MCF 10A (cell line): ENCODE measurements at regions of chr4 and their contacts with region 1.

Region 1: GRCh38 chr4:57037982-57038604 is 59.4 kb downstream of the POLR2B start:
- DNase-seq: peak; percentile 76
- H3K4me3 Mint-ChIP-seq: no peak overlapping the region
- H3K27ac Mint-ChIP-seq: no peak overlapping the region
- H3K4me1 Mint-ChIP-seq: peaks cover 24% of the 10 kb centered on the region
- H3K27me3 Mint-ChIP-seq: no peaks in the 10 kb centered on the region
- CTCF ChIP-seq: peak; percentile 89

Region 2: GRCh38 chr4:57053508-57053907 is 15.4 kb after region 1 on chr4:
- CTCF ChIA-PET with region 1: interaction called, 28 read pairs
- POLR2A ChIA-PET with region 1: interaction called, 3 read pairs
- intact Hi-C with region 1: no loop called
- DNase-seq: peak; percentile 56
- H3K4me3 Mint-ChIP-seq: no peak overlapping the region
- H3K27ac Mint-ChIP-seq: no peak overlapping the region
- H3K4me1 Mint-ChIP-seq: peaks cover 25% of the 10 kb centered on the region
- H3K27me3 Mint-ChIP-seq: no peaks in the 10 kb centered on the region
- CTCF ChIP-seq: no peak

Region 3: DNA sequence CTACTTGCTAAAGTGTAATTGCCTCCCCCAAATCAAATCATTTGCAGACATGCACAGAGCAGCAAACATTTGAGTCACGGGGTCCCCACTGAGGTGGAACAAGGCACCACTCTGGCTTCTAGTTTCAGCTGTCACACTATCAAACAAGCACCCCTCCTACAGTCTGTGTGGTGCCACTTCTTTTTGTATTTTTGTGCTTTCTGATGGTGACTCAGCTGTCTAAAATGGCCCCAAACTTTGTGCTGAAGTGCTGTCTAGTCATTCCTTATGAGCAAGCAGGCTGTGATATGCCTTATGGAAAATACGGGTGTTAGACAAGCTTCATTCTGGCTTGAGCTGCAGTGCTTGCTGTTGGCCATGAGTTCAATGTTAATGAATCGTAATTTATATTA is 56.7 kb after region 1 on chr4:
- CTCF ChIA-PET with region 1: interaction called, 13 read pairs
- POLR2A ChIA-PET with region 1: interaction called, 6 read pairs
- intact Hi-C with region 1: no loop called
- DNase-seq: no peak
- H3K4me3 Mint-ChIP-seq: no peak overlapping the region
- H3K27ac Mint-ChIP-seq: no peak overlapping the region
- H3K4me1 Mint-ChIP-seq: peaks cover 29% of the 10 kb centered on the region
- H3K27me3 Mint-ChIP-seq: no peaks in the 10 kb centered on the region
- CTCF ChIP-seq: no peak

Region 4: GRCh38 chr4:57131849-57132742 is 94.0 kb after region 1 on chr4:
- CTCF ChIA-PET with region 1: interaction called, 22 read pairs
- POLR2A ChIA-PET with region 1: interaction called, 3 read pairs
- intact Hi-C with region 1: no loop called
- DNase-seq: no peak
- H3K4me3 Mint-ChIP-seq: no peak overlapping the region
- H3K27ac Mint-ChIP-seq: no peak overlapping the region
- H3K4me1 Mint-ChIP-seq: peaks cover 12% of the 10 kb centered on the region
- H3K27me3 Mint-ChIP-seq: no peaks in the 10 kb centered on the region
- CTCF ChIP-seq: no peak

Region 5: GRCh38 chr4:57190601-57191481 is 152.7 kb after region 1 on chr4:
- CTCF ChIA-PET with region 1: interaction called, 12 read pairs
- POLR2A ChIA-PET with region 1: no interaction called
- intact Hi-C with region 1: no loop called
- DNase-seq: peak; percentile 50
- H3K4me3 Mint-ChIP-seq: no peak overlapping the region
- H3K27ac Mint-ChIP-seq: no peak overlapping the region
- H3K4me1 Mint-ChIP-seq: peaks cover 9% of the 10 kb centered on the region
- H3K27me3 Mint-ChIP-seq: no peaks in the 10 kb centered on the region
- CTCF ChIP-seq: peak; percentile 55

Region 6: DNA sequence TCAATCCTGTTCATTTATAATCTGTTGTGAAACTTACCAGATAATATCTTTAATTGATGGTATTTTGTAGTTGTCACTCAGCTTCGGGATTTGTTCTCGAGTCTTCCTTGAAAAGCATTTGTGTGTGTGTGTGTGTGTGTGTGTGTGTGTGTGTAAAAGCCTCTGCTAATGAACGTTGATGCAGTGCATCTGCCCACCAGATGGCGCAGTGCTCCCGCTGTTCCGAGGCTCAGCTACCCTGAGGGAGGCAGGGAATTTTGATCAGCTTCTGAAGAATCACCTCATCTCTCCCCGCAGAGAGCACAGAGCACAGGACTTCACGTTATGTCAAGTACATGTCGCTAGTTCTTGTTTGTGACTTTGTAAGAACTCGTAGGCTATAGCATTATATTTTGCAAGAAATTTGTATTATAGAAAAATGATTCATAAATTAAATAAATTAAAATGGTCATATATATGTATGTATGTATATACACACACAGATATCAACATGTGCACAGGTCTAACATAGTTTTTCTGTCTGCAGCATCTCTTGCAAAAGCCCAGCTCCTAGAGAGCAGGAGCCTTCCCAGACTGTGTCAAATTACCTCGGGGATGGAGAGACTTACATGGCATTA is 388.8 kb after region 1 on chr4:
- CTCF ChIA-PET with region 1: interaction called, 39 read pairs
- POLR2A ChIA-PET with region 1: no interaction called
- intact Hi-C with region 1: loop called (anchors 5 kb)
- DNase-seq: peak; percentile 78
- H3K4me3 Mint-ChIP-seq: no peak overlapping the region
- H3K27ac Mint-ChIP-seq: no peak overlapping the region
- H3K4me1 Mint-ChIP-seq: peaks cover 20% of the 10 kb centered on the region
- H3K27me3 Mint-ChIP-seq: no peaks in the 10 kb centered on the region
- CTCF ChIP-seq: peak; percentile 61